ENCODE measurements at regions of chr9 and their contacts with region 1.

Region 1: DNA sequence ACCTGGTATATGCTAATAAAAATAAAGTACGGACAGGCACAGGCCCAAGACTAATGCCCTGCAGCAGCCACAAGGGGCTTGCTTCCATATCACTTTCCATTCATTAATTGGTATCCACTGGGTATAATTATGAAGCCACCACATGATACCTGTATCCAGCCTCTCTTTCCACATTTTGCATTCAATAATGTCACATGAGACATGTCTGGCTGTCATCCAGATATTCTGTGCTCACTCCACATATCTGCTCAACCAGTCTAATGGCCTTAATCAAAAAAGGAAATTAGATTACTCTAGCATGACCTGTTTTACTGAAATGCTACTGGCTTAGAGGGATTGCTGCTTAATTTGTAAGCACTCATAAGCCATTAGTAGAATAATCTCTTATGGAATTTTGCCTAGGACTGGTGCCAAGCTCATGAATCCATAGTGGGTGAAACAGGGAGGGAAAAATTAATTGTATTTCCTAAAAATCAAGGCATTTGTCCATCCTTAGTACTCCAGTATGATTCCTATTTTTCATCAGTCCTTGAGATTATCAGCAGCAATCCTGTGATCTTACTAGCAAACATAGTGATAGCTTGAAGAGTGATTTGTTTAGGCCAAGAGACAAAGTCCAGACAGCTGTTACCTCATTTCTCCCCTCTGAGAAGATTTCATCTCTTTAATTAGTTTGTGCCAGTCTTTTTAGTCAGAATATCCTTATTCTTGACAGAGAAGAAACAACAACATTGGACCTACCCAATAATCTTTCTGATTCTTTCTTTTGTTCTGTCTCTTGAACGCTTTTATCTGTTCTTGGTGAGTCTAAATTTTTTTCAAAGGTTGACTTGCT is 119.2 kb upstream of the ABCA1 start:
- DNase-seq: peak in 1 of 2 experiments; percentile 36
- H3K4me3 ChIP-seq: no peak overlapping the region
- H3K4me3 Mint-ChIP-seq: peak overlapping the region; percentile 9
- H3K27ac Mint-ChIP-seq: peak overlapping the region; percentile 12
- H3K4me1 ChIP-seq: peaks cover 34% of the 10 kb centered on the region
- H3K4me1 Mint-ChIP-seq: peaks cover 46% of the 10 kb centered on the region
- H3K27me3 ChIP-seq: no peaks in the 10 kb centered on the region
- H3K27me3 Mint-ChIP-seq: no peaks in the 10 kb centered on the region
- CTCF ChIP-seq: no peak

Region 2: DNA sequence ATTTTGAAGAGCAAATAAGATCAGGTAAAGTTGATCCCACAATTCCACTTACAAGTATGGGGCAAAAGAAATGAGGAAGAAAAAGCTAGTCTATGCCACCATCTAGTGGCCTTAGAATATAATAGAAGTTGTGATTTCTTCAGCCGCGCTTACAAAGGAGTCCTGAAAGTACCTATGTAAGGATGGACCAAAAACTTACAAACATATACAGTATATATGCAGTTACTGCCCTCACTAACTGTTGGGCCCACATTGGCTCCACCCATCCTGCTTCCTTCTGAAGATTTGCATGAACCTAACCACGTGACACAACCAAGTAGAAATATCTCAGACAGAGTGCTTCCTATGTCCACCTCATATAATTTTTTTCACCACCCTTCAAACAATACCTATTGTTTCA is 364.5 kb before region 1 on chr9:
- CTCF ChIA-PET with region 1: no interaction called
- POLR2A ChIA-PET with region 1: no interaction called
- intact Hi-C with region 1: no loop called
- DNase-seq: peak in 1 of 2 experiments; percentile 37
- H3K4me3 ChIP-seq: no peak overlapping the region
- H3K4me3 Mint-ChIP-seq: no peak overlapping the region
- H3K27ac Mint-ChIP-seq: no peak overlapping the region
- H3K4me1 ChIP-seq: no peaks in the 10 kb centered on the region; the same call in 1 of the 2 replicates
- H3K4me1 Mint-ChIP-seq: no peaks in the 10 kb centered on the region
- H3K27me3 ChIP-seq: no peaks in the 10 kb centered on the region
- H3K27me3 Mint-ChIP-seq: no peaks in the 10 kb centered on the region
- CTCF ChIP-seq: peak; percentile 31 to 53

Region 3: GRCh38 chr9:104968025-104968982 is 78.8 kb before region 1 on chr9:
- CTCF ChIA-PET with region 1: no interaction called
- POLR2A ChIA-PET with region 1: interaction called, 10 read pairs
- intact Hi-C with region 1: loop called (anchors 2 kb)
- DNase-seq: peak; percentile 87 to 90
- H3K4me3 ChIP-seq: peak overlapping the region; percentile 77
- H3K4me3 Mint-ChIP-seq: peak overlapping the region; percentile 89
- H3K27ac Mint-ChIP-seq: peak overlapping the region; percentile 82
- H3K4me1 ChIP-seq: peaks cover 22% of the 10 kb centered on the region
- H3K4me1 Mint-ChIP-seq: peaks cover 37% of the 10 kb centered on the region
- H3K27me3 ChIP-seq: no peaks in the 10 kb centered on the region
- H3K27me3 Mint-ChIP-seq: no peaks in the 10 kb centered on the region
- CTCF ChIP-seq: no peak

Region 4: DNA sequence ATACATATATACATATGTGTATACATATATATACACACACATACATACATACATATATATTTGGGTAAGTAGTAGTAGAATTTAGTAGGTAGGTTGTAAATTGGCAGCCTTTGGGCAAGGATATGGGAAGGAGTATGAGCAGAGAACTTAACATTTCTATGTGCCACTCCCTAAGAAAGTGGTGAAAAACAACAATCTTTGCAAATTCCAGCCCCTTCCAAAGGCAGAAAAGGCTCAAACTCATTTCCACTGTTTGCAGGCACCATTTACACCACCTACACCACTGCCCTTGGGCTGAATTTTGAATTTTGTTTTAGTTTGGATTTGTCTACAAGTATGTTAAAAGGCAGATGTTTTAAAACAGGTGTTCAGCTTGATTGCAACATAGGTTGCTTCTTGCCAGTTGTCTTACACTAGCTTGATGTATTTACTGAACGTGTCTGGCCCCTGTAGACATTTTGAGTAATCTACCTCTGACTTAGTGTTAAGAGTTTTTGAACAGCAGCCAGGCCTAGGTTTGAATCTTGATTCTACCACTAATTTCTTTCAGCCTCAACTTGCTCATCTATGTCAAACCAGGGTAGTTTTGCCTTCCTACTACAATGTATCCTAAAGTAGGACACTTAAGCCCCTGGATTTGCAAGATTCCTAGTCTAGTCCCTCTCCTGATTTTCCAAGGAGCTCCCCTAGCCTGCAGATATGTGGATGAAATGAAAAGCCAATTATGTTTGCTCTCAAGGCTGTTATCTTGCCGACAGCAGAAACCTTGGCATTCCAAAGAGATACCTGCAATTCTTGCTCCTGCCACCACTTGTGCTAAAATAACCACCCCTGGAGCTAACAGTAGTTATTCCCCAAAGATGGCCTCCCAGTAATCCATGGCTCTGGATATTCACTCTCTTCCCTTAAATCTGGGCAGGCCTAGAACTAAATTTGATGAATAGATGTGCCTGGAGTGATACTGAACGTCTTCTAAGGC is 41.1 kb after region 1 on chr9:
- CTCF ChIA-PET with region 1: no interaction called
- POLR2A ChIA-PET with region 1: no interaction called
- intact Hi-C with region 1: loop called (anchors 1 kb)
- DNase-seq: peak; percentile 69 to 74
- H3K4me3 ChIP-seq: no peak overlapping the region
- H3K4me3 Mint-ChIP-seq: peak overlapping the region; percentile 37
- H3K27ac Mint-ChIP-seq: peak overlapping the region; percentile 84
- H3K4me1 ChIP-seq: peaks cover 48% of the 10 kb centered on the region
- H3K4me1 Mint-ChIP-seq: peaks cover 28% of the 10 kb centered on the region
- H3K27me3 ChIP-seq: no peaks in the 10 kb centered on the region
- H3K27me3 Mint-ChIP-seq: no peaks in the 10 kb centered on the region
- CTCF ChIP-seq: no peak

Region 5: GRCh38 chr9:105299190-105299854 is 252.2 kb after region 1 on chr9:
- CTCF ChIA-PET with region 1: no interaction called
- POLR2A ChIA-PET with region 1: no interaction called
- intact Hi-C with region 1: no loop called
- DNase-seq: no peak
- H3K4me3 ChIP-seq: no peak overlapping the region
- H3K4me3 Mint-ChIP-seq: no peak overlapping the region
- H3K27ac Mint-ChIP-seq: no peak overlapping the region
- H3K4me1 ChIP-seq: peaks cover 19% of the 10 kb centered on the region
- H3K4me1 Mint-ChIP-seq: peaks cover 15% of the 10 kb centered on the region
- H3K27me3 ChIP-seq: no peaks in the 10 kb centered on the region
- H3K27me3 Mint-ChIP-seq: no peaks in the 10 kb centered on the region
- CTCF ChIP-seq: no peak